ENCODE measurements at regions of chr9 and their contacts with region 1.

Region 1: DNA sequence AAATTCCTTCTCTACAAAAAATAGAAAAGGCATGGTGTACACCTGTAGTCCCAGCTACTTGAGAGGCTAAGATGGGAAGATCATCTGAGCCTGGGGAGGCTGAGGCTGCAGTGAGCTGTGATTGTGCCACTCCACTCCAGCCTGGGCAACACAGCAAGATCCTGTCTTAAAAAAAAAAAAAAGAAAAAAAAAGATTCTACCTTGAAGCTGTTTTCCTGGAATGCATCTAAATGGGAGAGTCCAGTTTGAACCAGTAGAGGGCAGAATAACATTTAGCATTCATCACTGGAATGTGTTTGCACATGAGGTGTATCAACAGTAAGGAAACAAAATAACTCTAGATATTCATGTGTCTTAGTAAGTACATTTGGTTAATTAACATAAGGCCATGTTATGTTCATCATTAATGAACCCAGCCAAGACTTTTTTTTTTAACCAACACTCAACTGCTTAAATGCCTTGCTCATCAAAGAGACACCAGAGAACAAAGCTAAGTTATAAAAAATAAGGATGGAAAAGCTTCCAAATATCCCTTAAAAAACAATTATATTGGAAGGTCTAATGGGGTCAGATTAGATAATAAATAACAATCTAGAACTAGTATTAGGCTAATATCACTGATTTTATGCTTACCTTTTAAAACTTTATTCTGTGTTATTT is 16.1 kb downstream of the IFNE start:
- DNase-seq: peak in 7 of 9 donors; percentile 37 to 67 (median 59)
- ATAC-seq: peak; percentile 85
- H3K4me3 ChIP-seq: no peak overlapping the region
- H3K4me3 Mint-ChIP-seq: no peak overlapping the region
- H3K27ac ChIP-seq: no peak overlapping the region
- H3K27ac Mint-ChIP-seq: no peak overlapping the region
- H3K4me1 ChIP-seq: no peaks in the 10 kb centered on the region
- H3K4me1 Mint-ChIP-seq: peaks cover 0 to 4% (median 0%) of the 10 kb centered on the region in 7 donors
- H3K27me3 ChIP-seq: no peaks in the 10 kb centered on the region
- H3K27me3 Mint-ChIP-seq: peaks cover under 1 to 37% (median 4%) of the 10 kb centered on the region in 5 donors

Region 2: DNA sequence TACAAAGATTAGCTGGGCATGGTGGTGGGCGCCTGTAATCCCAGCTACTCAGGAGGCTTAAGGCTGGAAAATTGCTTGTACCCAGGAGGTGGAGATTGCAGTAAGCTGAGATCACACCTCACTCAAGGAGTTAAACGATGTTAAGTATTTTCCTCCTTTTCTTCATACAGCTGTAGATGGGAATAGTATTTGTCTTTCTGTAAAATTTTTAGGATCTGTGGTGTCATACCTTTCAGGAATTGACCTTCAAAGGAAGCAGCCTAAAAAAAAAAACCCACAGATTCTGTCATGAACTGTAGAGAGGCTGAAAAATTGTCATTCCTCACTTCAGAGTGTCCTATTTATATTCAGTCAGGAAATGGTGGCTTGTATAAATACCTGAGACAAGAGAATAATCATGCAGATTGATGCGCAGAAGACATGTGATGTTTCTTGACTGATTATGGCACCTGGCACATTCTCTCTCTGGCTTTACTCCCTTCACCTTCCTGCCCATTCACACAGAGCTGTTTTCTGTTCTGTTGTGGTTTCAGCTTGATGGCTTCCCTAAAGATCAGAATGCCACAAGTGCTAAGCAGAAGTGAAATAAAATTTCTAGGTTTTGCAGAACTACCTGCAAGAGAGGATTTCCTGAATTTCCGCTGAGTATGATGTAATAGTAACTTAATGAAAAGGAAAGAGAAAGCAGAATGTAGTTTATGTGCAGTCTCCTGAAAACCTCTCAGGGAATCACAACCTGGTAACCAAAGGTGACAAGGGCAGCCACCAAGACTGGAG is 22.0 kb before region 1 on chr9:
- CTCF ChIA-PET with region 1: no interaction called
- POLR2A ChIA-PET with region 1: no interaction called
- intact Hi-C with region 1: no loop called
- DNase-seq: peak in 7 of 9 donors; percentile 53 to 84 (median 79)
- ATAC-seq: peak; percentile 95
- H3K4me3 ChIP-seq: no peak overlapping the region
- H3K4me3 Mint-ChIP-seq: peak overlapping the region; percentile 6 to 69 (median 55)
- H3K27ac ChIP-seq: peak overlapping the region; percentile 32
- H3K27ac Mint-ChIP-seq: peak overlapping the region; percentile 9 to 92 (median 74)
- H3K4me1 ChIP-seq: peaks cover 7 to 15% of the 10 kb centered on the region in 2 donors
- H3K4me1 Mint-ChIP-seq: peaks cover 10 to 23% (median 16%) of the 10 kb centered on the region in 7 donors
- H3K27me3 ChIP-seq: no peaks in the 10 kb centered on the region
- H3K27me3 Mint-ChIP-seq: peaks cover 0 to 40% (median 0%) of the 10 kb centered on the region in 5 donors

Region 3: GRCh38 chr9:21709464-21710058 is 243.6 kb after region 1 on chr9:
- CTCF ChIA-PET with region 1: interaction called, 26 read pairs
- POLR2A ChIA-PET with region 1: no interaction called
- intact Hi-C with region 1: loop called (anchors 1 kb)
- DNase-seq: peak; percentile 14 to 56 (median 46)
- ATAC-seq: peak; percentile 88
- H3K4me3 ChIP-seq: no peak overlapping the region
- H3K4me3 Mint-ChIP-seq: no peak overlapping the region
- H3K27ac ChIP-seq: no peak overlapping the region
- H3K27ac Mint-ChIP-seq: no peak overlapping the region
- H3K4me1 ChIP-seq: no peaks in the 10 kb centered on the region
- H3K4me1 Mint-ChIP-seq: peaks cover 0 to 22% (median 15%) of the 10 kb centered on the region in 7 donors
- H3K27me3 ChIP-seq: no peaks in the 10 kb centered on the region
- H3K27me3 Mint-ChIP-seq: peaks cover 0 to 27% (median 0%) of the 10 kb centered on the region in 5 donors

Region 4: GRCh38 chr9:21777701-21778100 is 311.7 kb after region 1 on chr9:
- CTCF ChIA-PET with region 1: interaction called, 14 read pairs
- POLR2A ChIA-PET with region 1: no interaction called
- intact Hi-C with region 1: no loop called
- DNase-seq: peak in 2 of 9 donors; percentile 11 to 24
- ATAC-seq: no peak
- H3K4me3 ChIP-seq: peak overlapping the region; percentile 12
- H3K4me3 Mint-ChIP-seq: no peak overlapping the region
- H3K27ac ChIP-seq: no peak overlapping the region
- H3K27ac Mint-ChIP-seq: no peak overlapping the region
- H3K4me1 ChIP-seq: peaks cover 10 to 34% of the 10 kb centered on the region in 2 donors
- H3K4me1 Mint-ChIP-seq: peaks cover 0 to 4% (median 0%) of the 10 kb centered on the region in 7 donors
- H3K27me3 ChIP-seq: no peaks in the 10 kb centered on the region
- H3K27me3 Mint-ChIP-seq: peaks cover 0 to 18% (median 0%) of the 10 kb centered on the region in 5 donors

Measured in naive thymus-derived CD4-positive, alpha-beta T cell (primary cell).